A549 (cell line): ENCODE measurements at regions of chr4 and their contacts with region 1.

Region 1: GRCh38 chr4:15956179-15956850 is 6.7 kb downstream of the FGFBP2 start:
- DNase-seq: peak; percentile 72 to 77
- ATAC-seq: peak; percentile 94 to 96
- H3K4me3 ChIP-seq: no peak overlapping the region
- H3K27ac ChIP-seq: peak overlapping the region; percentile 19 to 57; a peak in 3 of 6 replicates
- H3K4me1 ChIP-seq: peaks cover 5% of the 10 kb centered on the region
- CTCF ChIP-seq: peak; percentile 92
- EP300 ChIP-seq: no peak
- POLR2A ChIP-seq: no peak
- RAD21 ChIP-seq: peak; percentile 97 to 99

Region 2: DNA sequence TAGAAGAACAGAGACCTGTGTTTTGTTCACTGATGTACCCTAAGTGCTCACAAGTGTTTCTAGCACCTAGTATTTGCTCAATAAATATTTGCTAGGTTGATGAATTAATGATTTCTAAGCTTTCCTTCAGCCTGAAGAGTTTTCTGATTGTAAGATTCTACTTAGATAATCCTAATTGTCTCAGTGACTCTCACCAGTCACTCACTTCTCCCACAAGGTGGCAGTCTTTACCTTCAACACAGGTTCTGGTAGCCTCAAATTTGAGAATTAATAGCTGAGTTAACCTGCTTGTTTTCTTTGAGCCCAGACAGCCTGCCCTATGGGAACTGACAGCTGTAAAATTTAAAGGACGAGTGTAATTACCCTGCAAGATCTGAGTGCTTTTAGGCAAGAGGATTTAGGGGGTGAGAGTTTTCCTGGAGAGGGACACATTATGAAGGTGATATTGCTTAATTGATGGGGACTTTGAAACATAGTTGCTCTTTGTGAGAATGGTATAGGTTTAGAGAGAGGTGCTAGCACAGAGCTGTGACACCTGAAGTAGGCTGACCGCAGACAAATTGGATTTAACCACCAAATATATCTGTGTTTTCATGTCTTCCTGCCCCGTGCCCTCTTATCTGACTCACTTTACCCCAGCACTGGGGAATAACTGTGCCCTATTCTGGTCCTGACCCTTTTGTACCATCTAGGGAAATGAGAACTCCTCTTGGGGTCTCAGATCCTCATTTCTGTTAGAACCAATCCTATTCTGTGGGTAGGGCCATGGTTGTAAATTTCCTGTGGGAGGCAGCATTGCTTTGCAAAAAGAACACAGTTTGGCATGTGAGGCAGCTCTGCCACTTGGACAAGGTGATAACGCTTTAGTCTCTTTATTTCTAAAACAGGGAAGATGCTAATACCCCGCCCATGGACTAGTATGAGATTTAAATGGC is 150.5 kb before region 1 on chr4:
- CTCF ChIA-PET with region 1: interaction called, 124 read pairs
- POLR2A ChIA-PET with region 1: interaction called, 4 read pairs
- DNase-seq: peak; percentile 17 to 64
- ATAC-seq: peak; percentile 85 to 89
- H3K4me3 ChIP-seq: no peak overlapping the region
- H3K27ac ChIP-seq: 0 out of 6 replicates have a peak overlapping the region, but pooled peaks of 1 of the 2 experiments have one; percentile 14
- H3K4me1 ChIP-seq: no peaks in the 10 kb centered on the region
- CTCF ChIP-seq: peak; percentile 74
- EP300 ChIP-seq: no peak
- POLR2A ChIP-seq: no peak
- RAD21 ChIP-seq: peak; percentile 78 to 84

Region 3: GRCh38 chr4:15893962-15894361 is 62.4 kb before region 1 on chr4:
- CTCF ChIA-PET with region 1: interaction called, 38 read pairs
- POLR2A ChIA-PET with region 1: no interaction called
- DNase-seq: peak; percentile 82 to 95
- ATAC-seq: peak; percentile 97 to 100
- H3K4me3 ChIP-seq: no peak overlapping the region
- H3K27ac ChIP-seq: peak overlapping the region; percentile 77 to 86
- H3K4me1 ChIP-seq: peaks cover 40% of the 10 kb centered on the region
- CTCF ChIP-seq: no peak
- EP300 ChIP-seq: no peak
- POLR2A ChIP-seq: no peak
- RAD21 ChIP-seq: no peak

Region 4: DNA sequence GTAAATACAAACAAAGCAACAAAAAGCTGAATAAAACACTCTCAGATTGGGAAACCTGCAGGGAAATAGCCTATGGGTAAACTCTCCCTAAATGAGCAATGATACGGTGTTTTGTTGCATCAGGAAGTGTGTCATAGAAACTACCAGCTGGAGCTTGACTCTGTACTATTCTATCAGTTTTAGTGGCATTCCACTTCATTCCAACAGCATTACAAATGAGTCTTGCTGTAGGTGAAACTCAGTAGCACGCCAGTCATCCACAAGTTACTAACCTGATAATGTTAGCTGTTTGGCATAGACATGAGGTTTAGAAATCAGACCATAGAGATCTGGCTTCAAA is 42.7 kb before region 1 on chr4:
- CTCF ChIA-PET with region 1: interaction called, 11 read pairs
- POLR2A ChIA-PET with region 1: no interaction called
- DNase-seq: peak; percentile 31 to 72
- ATAC-seq: peak; percentile 89 to 92
- H3K4me3 ChIP-seq: no peak overlapping the region
- H3K27ac ChIP-seq: peak overlapping the region in 1 of 2 experiments; percentile 76; a peak in 5 of 6 replicates
- H3K4me1 ChIP-seq: peaks cover 20% of the 10 kb centered on the region
- CTCF ChIP-seq: no peak
- EP300 ChIP-seq: no peak
- POLR2A ChIP-seq: no peak
- RAD21 ChIP-seq: no peak

Region 5: DNA sequence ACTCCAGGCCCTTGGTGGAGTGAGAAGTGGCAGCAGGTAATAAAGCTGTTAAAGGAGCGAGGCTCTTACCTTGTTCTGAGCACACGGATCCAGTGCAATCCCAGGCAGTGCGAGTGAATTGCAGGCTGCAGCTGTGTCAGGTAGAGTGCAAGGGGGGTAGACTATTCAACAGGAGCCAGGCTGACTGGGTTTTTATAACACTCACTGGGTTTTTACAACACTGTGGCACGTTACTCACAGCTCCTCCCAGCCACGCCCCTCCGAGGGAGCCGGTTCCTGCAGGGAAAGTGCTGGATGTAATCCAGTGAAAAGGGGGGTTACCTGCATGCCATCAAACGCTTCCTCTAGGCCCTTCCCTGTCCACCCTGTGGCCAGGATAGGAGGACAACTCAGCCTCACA is 18.1 kb before region 1 on chr4:
- CTCF ChIA-PET with region 1: interaction called, 15 read pairs
- POLR2A ChIA-PET with region 1: no interaction called
- DNase-seq: peak; percentile 17 to 26
- ATAC-seq: peak; percentile 59 to 66
- H3K4me3 ChIP-seq: no peak overlapping the region
- H3K27ac ChIP-seq: peak overlapping the region in 1 of 2 experiments; percentile 72; a peak in 3 of 6 replicates
- H3K4me1 ChIP-seq: peaks cover 7% of the 10 kb centered on the region
- CTCF ChIP-seq: no peak
- EP300 ChIP-seq: no peak
- POLR2A ChIP-seq: no peak
- RAD21 ChIP-seq: no peak

Region 6: GRCh38 chr4:15976456-15977447 is 20.4 kb after region 1 on chr4:
- CTCF ChIA-PET with region 1: interaction called, 13 read pairs
- POLR2A ChIA-PET with region 1: no interaction called
- DNase-seq: no peak
- ATAC-seq: peak in 1 of 2 experiments; percentile 54; a peak in 2 of 6 replicates
- H3K4me3 ChIP-seq: no peak overlapping the region
- H3K27ac ChIP-seq: no peak overlapping the region
- H3K4me1 ChIP-seq: no peaks in the 10 kb centered on the region
- CTCF ChIP-seq: no peak
- EP300 ChIP-seq: no peak
- POLR2A ChIP-seq: no peak
- RAD21 ChIP-seq: no peak

Region 7: DNA sequence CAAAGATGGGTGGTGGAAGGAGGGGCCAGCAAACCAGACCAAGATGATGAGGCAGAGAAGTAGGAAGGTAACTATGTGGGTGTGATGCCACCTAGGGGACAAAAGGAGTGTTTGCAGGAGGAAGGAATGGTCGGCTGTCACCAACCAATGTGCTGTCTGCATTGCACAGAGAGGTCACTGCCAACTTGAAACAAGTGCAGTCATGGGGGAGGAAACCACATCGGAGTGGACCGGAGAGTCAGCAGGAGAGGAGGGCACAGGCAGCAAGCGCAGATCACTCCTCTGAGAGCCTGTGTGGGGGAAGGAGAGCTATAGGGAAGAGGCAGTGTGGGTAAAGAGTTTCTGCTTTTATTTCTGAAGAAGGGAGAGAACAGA is 45.2 kb after region 1 on chr4:
- CTCF ChIA-PET with region 1: interaction called, 16 read pairs
- POLR2A ChIA-PET with region 1: no interaction called
- DNase-seq: peak; percentile 58 to 73
- ATAC-seq: peak; percentile 98 to 99
- H3K4me3 ChIP-seq: no peak overlapping the region
- H3K27ac ChIP-seq: no peak overlapping the region
- H3K4me1 ChIP-seq: no peaks in the 10 kb centered on the region
- CTCF ChIP-seq: peak; percentile 70
- EP300 ChIP-seq: no peak
- POLR2A ChIP-seq: no peak
- RAD21 ChIP-seq: peak; percentile 79 to 89